Caco-2 (cell line): ENCODE measurements at regions of chr2 and their contacts with region 1.

Region 1: DNA sequence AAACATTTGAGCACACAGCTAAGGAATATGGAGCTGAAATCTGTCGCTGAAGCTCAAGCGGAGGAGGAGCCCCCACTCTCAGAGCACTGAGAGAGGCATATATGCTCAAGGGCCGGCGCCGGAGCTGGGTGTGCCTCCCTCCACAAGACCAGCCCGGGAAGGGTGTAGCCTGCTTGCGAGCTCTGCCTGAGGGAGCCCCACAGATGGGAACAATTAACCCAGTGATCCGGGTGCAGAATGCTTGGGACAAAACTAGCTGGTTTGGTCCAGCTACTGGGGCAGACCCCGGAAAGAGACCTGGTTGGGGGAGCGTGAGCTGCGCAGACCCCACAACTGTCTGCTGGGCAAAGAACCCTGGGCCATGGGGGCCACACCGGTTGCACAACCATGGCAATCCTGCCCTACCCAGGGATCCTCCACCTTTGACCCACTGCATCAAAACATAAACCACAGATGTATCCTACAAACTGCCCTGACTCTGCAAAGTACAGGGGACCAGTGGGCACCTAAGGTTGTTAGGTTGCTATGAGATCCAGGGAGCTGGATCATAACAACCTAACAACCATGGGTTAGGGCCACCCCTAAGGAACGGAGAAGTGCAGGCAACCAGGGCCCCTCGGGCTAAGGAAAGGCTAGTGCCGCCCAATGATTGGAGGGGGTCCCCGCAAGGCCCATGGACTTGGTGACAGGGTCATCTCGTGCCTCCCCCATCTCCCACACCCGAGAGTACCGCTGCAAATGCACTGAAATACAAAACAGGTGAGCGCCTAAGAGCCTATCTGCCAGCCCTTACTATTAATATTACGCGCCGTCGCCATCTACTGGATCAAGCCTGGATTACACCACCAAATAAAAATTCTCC is 53.4 kb upstream of the SCN1A start:
- DNase-seq: peak; percentile 65 to 68
- H3K4me3 ChIP-seq: no peak overlapping the region
- H3K4me3 Mint-ChIP-seq: no peak overlapping the region
- H3K27ac Mint-ChIP-seq: no peak overlapping the region
- H3K4me1 ChIP-seq: peaks cover 5% of the 10 kb centered on the region
- H3K4me1 Mint-ChIP-seq: no peaks in the 10 kb centered on the region
- H3K27me3 ChIP-seq: no peaks in the 10 kb centered on the region
- H3K27me3 Mint-ChIP-seq: no peaks in the 10 kb centered on the region
- CTCF ChIP-seq: peak; percentile 63 to 69

Region 2: DNA sequence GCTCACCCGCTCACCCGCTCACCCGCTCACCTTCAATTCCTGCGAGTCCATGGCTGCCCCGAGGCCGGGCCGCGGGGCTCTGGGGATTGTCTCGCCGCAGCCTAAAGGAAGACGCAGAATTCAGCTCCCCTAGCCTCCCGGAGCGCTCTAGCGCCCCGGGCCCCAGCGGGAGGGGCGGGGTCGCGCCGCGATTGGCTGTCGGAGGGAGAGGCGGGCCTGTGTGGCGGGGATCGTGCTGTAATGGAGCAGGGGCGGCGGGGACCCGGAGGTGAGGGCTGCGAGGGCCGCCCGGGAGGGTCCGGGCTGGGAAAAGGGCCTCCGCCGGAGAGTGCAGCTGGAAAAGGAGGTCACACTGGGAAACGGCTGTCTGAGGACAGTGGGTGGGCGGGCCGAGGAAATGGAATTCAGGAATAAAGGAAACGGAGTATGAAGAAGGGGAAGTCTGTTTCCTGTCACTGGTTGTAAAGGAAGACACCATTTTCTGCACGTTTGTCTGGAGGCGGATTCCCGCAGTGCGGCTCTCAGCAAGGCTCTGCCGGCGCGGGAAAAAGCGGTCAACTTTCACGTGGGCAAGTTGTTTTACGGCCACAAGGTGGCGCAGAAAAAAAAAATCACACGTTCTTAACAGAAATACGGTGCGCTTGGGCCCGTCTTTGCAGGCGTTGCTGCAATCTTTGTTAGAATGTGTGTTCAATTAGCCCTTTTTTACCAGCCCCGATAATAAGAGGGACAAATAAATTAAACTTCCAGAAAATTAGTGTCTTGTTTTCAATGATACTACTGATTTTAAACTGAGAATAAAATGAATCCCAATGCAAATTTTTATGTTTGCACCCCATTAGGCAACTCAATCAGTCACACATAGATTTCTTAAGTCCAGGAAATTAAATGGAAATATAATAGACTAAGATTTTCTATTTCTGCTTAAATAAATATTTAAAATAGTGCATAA is 227.3 kb before region 1 on chr2 and contains the start of gene TTC21B:
- CTCF ChIA-PET with region 1: interaction called, 3 read pairs
- POLR2A ChIA-PET with region 1: no interaction called
- intact Hi-C with region 1: loop called (anchors 1 kb)
- DNase-seq: peak; percentile 96 to 98
- H3K4me3 ChIP-seq: peak within 1 kb of the TSS; percentile 64
- H3K4me3 Mint-ChIP-seq: no peak within 1 kb of the TSS
- H3K27ac Mint-ChIP-seq: no peak within 1 kb of the TSS
- H3K4me1 ChIP-seq: peaks cover 15% of the 10 kb centered on the region
- H3K4me1 Mint-ChIP-seq: peaks cover 7% of the 10 kb centered on the region
- H3K27me3 ChIP-seq: no peaks in the 10 kb centered on the region
- H3K27me3 Mint-ChIP-seq: no peaks in the 10 kb centered on the region
- CTCF ChIP-seq: peak; percentile 79 to 87
- total RNA-seq, gene TTC21B: 13.5 and 14.2 TPM in 2 replicates

Region 3: DNA sequence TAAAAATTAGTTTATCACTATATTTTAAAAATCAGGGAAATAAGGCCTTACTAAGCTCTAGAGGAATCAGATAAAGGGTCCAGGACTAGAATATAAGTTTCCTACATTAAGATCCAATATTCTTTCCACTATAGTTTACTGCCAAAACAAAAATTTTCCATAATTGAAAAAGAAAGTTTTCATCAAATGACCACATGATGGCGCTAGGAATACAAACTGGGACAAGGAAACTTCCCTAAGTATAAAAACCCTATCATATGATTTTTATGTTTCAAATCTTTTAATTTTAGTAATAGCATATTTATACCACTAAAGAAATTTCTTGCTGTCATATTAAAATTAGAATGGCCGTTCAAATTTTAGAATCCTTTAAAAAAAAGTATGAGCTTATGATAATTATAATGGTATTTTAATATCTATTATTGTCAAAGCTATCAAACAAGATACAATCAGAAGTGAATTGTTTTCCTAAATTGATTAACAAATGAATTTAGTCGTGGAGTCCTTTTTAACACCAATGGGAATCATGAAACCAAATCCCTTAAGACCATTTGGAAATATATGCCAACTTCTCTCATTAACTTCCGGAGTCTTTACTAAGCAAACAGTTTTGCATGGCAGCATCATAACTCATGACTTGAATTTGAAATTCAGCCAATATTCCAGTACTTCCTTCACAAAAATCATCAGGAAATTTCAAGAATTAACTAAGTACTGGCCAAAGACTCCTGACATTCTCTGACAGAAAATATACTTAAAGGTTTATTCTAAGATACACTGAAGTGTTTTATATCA is 123.6 kb before region 1 on chr2:
- CTCF ChIA-PET with region 1: interaction called, 3 read pairs
- POLR2A ChIA-PET with region 1: no interaction called
- intact Hi-C with region 1: loop called (anchors 1 kb)
- DNase-seq: peak in 1 of 2 experiments; percentile 5
- H3K4me3 ChIP-seq: no peak overlapping the region
- H3K4me3 Mint-ChIP-seq: no peak overlapping the region
- H3K27ac Mint-ChIP-seq: no peak overlapping the region
- H3K4me1 ChIP-seq: no peaks in the 10 kb centered on the region
- H3K4me1 Mint-ChIP-seq: no peaks in the 10 kb centered on the region
- H3K27me3 ChIP-seq: no peaks in the 10 kb centered on the region
- H3K27me3 Mint-ChIP-seq: peaks cover 4% of the 10 kb centered on the region
- CTCF ChIP-seq: peak; percentile 53 to 58

Region 4: GRCh38 chr2:166112193-166112605 is 69.0 kb before region 1 on chr2:
- CTCF ChIA-PET with region 1: no interaction called
- POLR2A ChIA-PET with region 1: no interaction called
- intact Hi-C with region 1: no loop called
- DNase-seq: no peak
- H3K4me3 ChIP-seq: no peak overlapping the region
- H3K4me3 Mint-ChIP-seq: no peak overlapping the region
- H3K27ac Mint-ChIP-seq: no peak overlapping the region
- H3K4me1 ChIP-seq: no peaks in the 10 kb centered on the region
- H3K4me1 Mint-ChIP-seq: no peaks in the 10 kb centered on the region
- H3K27me3 ChIP-seq: no peaks in the 10 kb centered on the region
- H3K27me3 Mint-ChIP-seq: no peaks in the 10 kb centered on the region
- CTCF ChIP-seq: no peak

Region 5: DNA sequence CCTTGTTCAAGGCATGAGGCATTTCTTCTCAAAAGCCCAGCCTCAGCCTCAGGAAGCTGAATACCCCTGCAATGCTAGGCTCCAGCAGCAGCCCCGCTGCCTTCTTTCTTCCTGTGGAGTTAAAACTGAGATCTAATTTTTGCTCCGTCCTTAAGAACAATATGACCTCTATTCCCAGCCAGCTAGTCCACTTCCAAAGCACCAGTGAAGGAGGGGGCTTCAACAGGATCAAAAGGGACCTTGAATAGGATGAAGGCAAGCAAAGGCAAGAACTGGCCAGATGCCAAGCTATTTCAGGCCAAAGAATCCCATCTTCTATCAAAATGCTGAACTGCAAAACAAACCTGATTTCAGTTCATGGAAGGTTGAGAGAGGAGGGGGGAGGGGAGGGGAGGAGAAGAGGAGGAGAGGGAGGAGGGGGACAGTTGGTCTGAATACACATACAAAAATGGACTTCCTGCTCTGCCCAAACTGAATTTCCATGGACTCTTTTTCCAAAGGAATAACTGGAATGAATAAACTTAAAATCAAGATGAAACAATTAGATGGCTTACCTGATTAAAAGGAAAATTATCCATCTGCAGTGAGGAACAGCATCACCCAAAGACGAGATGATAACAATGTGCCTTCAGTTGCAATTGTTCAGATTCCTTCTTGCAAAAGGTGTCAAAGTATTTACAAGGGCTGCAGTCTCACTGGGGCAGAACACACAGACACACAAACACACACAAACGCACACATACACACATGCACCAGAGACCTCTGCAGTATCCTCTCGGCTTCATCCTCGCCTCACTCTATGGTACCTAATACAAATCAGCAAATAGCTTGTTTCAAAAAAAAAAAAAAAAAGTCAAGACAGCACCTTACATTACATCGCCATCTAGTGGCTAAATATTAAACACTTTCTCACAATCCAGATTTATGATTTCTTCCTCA is 53.7 kb before region 1 on chr2 and contains the start of gene SCN1A:
- CTCF ChIA-PET with region 1: interaction called, 3 read pairs
- POLR2A ChIA-PET with region 1: no interaction called
- intact Hi-C with region 1: loop called (anchors 1 kb)
- DNase-seq: peak in 1 of 2 experiments; percentile 32
- H3K4me3 ChIP-seq: no peak within 1 kb of the TSS
- H3K4me3 Mint-ChIP-seq: no peak within 1 kb of the TSS
- H3K27ac Mint-ChIP-seq: no peak within 1 kb of the TSS
- H3K4me1 ChIP-seq: no peaks in the 10 kb centered on the region
- H3K4me1 Mint-ChIP-seq: no peaks in the 10 kb centered on the region
- H3K27me3 ChIP-seq: no peaks in the 10 kb centered on the region; the same call in 1 of the 2 replicates
- H3K27me3 Mint-ChIP-seq: peaks cover 6% of the 10 kb centered on the region
- CTCF ChIP-seq: peak; percentile 53 to 55
- total RNA-seq, gene SCN1A: not detected in 2 replicates

Region 6: GRCh38 chr2:166134252-166135151 is 46.7 kb before region 1 on chr2:
- CTCF ChIA-PET with region 1: no interaction called
- POLR2A ChIA-PET with region 1: no interaction called
- intact Hi-C with region 1: loop called (anchors 1 kb)
- DNase-seq: peak; percentile 53 to 59
- H3K4me3 ChIP-seq: no peak overlapping the region
- H3K4me3 Mint-ChIP-seq: no peak overlapping the region
- H3K27ac Mint-ChIP-seq: no peak overlapping the region
- H3K4me1 ChIP-seq: peaks cover 22% of the 10 kb centered on the region
- H3K4me1 Mint-ChIP-seq: peaks cover 10% of the 10 kb centered on the region
- H3K27me3 ChIP-seq: no peaks in the 10 kb centered on the region; the same call in 1 of the 2 replicates
- H3K27me3 Mint-ChIP-seq: no peaks in the 10 kb centered on the region
- CTCF ChIP-seq: no peak

Region 7: GRCh38 chr2:166211079-166211478 is 29.9 kb after region 1 on chr2:
- CTCF ChIA-PET with region 1: no interaction called
- POLR2A ChIA-PET with region 1: no interaction called
- intact Hi-C with region 1: no loop called
- DNase-seq: no peak
- H3K4me3 ChIP-seq: no peak overlapping the region
- H3K4me3 Mint-ChIP-seq: no peak overlapping the region
- H3K27ac Mint-ChIP-seq: no peak overlapping the region
- H3K4me1 ChIP-seq: no peaks in the 10 kb centered on the region
- H3K4me1 Mint-ChIP-seq: no peaks in the 10 kb centered on the region
- H3K27me3 ChIP-seq: no peaks in the 10 kb centered on the region
- H3K27me3 Mint-ChIP-seq: no peaks in the 10 kb centered on the region
- CTCF ChIP-seq: no peak

Region 8: GRCh38 chr2:166417669-166418068 is 236.5 kb after region 1 on chr2:
- CTCF ChIA-PET with region 1: interaction called, 3 read pairs
- POLR2A ChIA-PET with region 1: no interaction called
- intact Hi-C with region 1: loop called (anchors 2 kb)
- DNase-seq: peak in 1 of 2 experiments; percentile 19
- H3K4me3 ChIP-seq: no peak overlapping the region
- H3K4me3 Mint-ChIP-seq: no peak overlapping the region
- H3K27ac Mint-ChIP-seq: no peak overlapping the region
- H3K4me1 ChIP-seq: no peaks in the 10 kb centered on the region
- H3K4me1 Mint-ChIP-seq: no peaks in the 10 kb centered on the region
- H3K27me3 ChIP-seq: no peaks in the 10 kb centered on the region
- H3K27me3 Mint-ChIP-seq: peaks cover 4% of the 10 kb centered on the region
- CTCF ChIP-seq: peak in 1 of 2 experiments; percentile 36